ENCODE measurements at regions of chr11 and their contacts with region 1.

Region 1: DNA sequence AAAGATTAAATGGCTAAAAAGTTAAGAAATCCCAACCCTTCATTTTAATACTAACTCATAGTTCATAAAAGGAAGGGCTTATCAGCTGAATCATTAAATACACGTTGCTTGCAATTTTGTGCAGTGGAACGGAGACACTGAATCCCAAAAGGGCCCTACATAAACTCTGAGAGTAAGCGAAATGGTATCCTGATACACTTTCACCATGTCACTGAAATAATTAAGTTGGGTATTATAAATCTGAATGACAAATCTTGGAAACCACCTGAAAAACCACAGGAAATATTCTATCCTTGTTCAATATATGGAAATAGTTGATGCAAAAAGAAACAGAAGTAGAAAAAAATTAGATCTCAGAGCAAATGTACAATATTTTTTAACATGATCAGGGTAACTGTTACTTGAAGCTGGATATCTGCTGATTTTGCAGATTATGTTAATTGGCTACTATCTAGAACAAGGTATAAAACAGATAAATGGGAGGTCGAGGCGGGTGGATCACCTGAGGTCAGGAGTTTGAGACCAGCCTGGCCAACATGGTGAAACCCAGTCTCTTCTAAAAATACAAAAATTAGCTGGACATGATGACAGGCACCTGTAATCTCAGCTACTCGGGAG is 55.1 kb downstream of the MAML2 start:
- DNase-seq: no peak
- ATAC-seq: no peak
- H3K4me3 ChIP-seq: no peak overlapping the region
- H3K4me3 Mint-ChIP-seq: peak overlapping the region in 7 of 10 donors; percentile 11 to 76 (median 41)
- H3K27ac ChIP-seq: no peak overlapping the region
- H3K27ac Mint-ChIP-seq: peak overlapping the region in 6 of 9 donors; percentile 14 to 85 (median 61)
- H3K4me1 ChIP-seq: peaks cover 0 to 39% of the 10 kb centered on the region in 2 donors
- H3K4me1 Mint-ChIP-seq: peaks cover 35 to 95% (median 89%) of the 10 kb centered on the region in 7 donors
- H3K27me3 ChIP-seq: no peaks in the 10 kb centered on the region
- H3K27me3 Mint-ChIP-seq: no peaks in the 10 kb centered on the region

Region 2: DNA sequence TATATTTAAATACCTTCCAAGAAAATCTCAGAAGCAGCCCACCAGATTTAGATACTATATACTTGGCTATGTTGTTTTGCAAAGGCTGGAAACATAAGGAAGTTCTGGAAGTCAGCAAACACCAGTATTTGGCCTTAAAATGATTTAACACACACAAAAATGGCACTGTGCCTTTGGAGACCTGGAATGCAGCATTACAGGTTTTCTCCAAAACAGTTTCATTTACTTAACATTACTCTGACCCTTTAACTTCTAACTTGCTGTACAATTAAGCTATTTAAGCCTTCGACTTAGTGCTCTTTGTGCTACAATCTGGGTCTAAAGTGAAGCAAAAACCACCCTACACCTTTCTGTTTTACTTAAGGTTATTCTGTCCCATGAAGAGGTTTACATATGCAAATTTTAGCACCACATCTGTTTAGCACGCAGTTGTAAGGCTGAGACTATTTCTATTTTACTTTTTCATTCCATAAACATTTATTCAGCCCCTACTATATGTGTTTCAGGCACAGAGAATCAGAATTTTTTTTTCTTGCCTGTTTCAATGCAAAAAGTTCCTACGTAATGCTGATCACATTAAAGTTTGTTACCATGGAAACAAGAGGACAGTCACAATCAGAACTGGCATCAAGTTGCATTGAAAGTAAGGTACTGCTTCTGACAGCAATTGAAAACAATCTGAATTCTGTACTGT is 15.3 kb before region 1 on chr11:
- CTCF ChIA-PET with region 1: interaction called, 3 read pairs
- POLR2A ChIA-PET with region 1: interaction called, 3 read pairs
- intact Hi-C with region 1: loop called in 1 of 2 experiments (anchors 1 kb)
- DNase-seq: peak in 7 of 9 donors; percentile 37 to 74 (median 65)
- ATAC-seq: peak; percentile 87
- H3K4me3 ChIP-seq: no peak overlapping the region
- H3K4me3 Mint-ChIP-seq: peak overlapping the region in 3 of 10 donors; percentile 6 to 60 (median 24)
- H3K27ac ChIP-seq: peak overlapping the region; percentile 69
- H3K27ac Mint-ChIP-seq: peak overlapping the region in 8 of 9 donors; percentile 66 to 100 (median 90)
- H3K4me1 ChIP-seq: peaks cover 6 to 15% of the 10 kb centered on the region in 2 donors
- H3K4me1 Mint-ChIP-seq: peaks cover 16 to 82% (median 76%) of the 10 kb centered on the region in 7 donors
- H3K27me3 ChIP-seq: no peaks in the 10 kb centered on the region
- H3K27me3 Mint-ChIP-seq: no peaks in the 10 kb centered on the region

Region 3: DNA sequence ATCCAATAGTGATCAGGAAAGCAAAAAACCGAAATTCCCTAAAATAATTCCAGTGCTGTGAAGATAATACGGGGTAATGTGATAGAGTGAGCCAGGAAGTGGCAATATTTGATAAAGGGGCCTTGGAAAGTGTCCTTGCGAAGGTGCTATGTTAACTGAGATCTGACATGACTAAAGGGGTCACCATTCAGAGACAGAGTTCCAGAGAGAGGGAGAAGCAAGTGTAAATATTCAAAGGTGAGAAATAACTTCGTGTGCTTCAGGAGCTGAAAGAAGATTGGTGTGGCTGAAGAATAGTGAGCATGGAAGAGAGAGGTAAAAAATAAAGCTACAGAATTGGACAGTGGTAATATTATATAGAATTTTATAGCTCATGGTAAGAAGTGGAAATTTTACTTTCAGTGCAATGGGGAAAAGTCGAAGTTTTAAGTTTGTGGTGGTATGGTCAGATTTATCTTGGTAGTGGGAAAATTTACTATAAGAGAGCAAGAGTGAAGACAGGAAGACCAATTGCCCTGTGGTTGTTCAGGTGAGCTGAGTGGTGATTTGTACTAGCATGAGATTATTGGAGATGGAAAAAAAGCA is 266.4 kb after region 1 on chr11:
- CTCF ChIA-PET with region 1: no interaction called
- POLR2A ChIA-PET with region 1: no interaction called
- intact Hi-C with region 1: no loop called
- DNase-seq: no peak
- ATAC-seq: no peak
- H3K4me3 ChIP-seq: no peak overlapping the region
- H3K4me3 Mint-ChIP-seq: no peak overlapping the region
- H3K27ac ChIP-seq: no peak overlapping the region
- H3K27ac Mint-ChIP-seq: no peak overlapping the region
- H3K4me1 ChIP-seq: no peaks in the 10 kb centered on the region
- H3K4me1 Mint-ChIP-seq: no peaks in the 10 kb centered on the region
- H3K27me3 ChIP-seq: no peaks in the 10 kb centered on the region
- H3K27me3 Mint-ChIP-seq: peaks cover 0 to 4% (median 0%) of the 10 kb centered on the region in 5 donors

Measured in naive thymus-derived CD4-positive, alpha-beta T cell (primary cell).